Activated CD4-positive, alpha-beta T cell treated with anti-CD3 and anti-CD28 coated beads for 36 hours (primary cell): ENCODE measurements at regions of chr19 and their contacts with region 1.

Region 1: GRCh38 chr19:55624109-55625003 is at the start of gene ZNF784:
- DNase-seq: peak; percentile 97
- ATAC-seq: peak; percentile 70
- H3K4me3 Mint-ChIP-seq: peak within 1 kb of the TSS; percentile 79
- H3K27ac Mint-ChIP-seq: peak within 1 kb of the TSS; percentile 85
- H3K4me1 Mint-ChIP-seq: peaks cover 53% of the 10 kb centered on the region
- H3K27me3 Mint-ChIP-seq: no peaks in the 10 kb centered on the region
- total RNA-seq, gene ZNF784: 3.2 to 4.3 TPM

Region 2: GRCh38 chr19:55279770-55280643 is 344.3 kb before region 1 on chr19 and contains the start of gene HSPBP1:
- CTCF ChIA-PET with region 1: no interaction called
- POLR2A ChIA-PET with region 1: no interaction called
- intact Hi-C with region 1: loop called in 1 of 2 experiments (anchors 1 kb)
- DNase-seq: peak; percentile 98
- ATAC-seq: peak; percentile 92
- H3K4me3 Mint-ChIP-seq: peak within 1 kb of the TSS; percentile 100
- H3K27ac Mint-ChIP-seq: peak within 1 kb of the TSS; percentile 98
- H3K4me1 Mint-ChIP-seq: peaks cover 24% of the 10 kb centered on the region
- H3K27me3 Mint-ChIP-seq: no peaks in the 10 kb centered on the region
- total RNA-seq, gene HSPBP1: 41.1 to 45.2 TPM

Region 3: DNA sequence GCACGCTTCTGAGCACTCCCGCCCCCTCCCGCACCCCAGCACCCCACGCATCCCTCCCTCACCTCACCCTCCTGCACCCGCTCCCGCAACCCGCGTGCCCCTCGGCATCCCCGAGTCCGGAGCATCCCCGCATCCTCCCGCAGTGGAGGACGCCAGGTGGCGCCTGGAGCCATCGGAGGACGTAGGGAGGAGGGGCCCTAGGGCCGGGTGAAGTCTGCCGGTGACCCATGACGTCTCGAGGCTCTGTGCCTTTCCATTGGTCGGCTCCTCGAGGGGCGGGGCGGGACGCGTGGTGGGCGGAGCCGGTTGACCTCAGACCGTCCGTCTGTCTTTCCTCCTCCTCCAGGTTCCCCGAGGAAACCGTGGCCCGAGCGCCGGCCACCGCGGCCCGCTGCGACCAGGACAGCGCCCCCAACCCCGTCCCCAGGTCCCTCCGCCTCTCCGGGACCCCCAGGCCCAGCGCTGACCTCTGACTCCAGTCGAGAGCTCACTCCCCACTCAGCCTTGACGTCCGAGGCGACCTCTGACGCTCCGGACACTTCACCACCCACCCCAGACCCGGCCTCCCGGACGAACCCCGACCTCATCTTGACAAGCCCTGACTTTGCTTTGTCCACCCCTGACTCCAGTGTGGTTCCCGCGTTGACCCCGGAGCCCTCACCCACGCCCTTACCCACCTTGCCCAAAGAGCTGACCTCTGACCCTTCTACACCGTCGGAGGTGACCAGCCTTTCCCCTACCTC is 107.3 kb before region 1 on chr19:
- CTCF ChIA-PET with region 1: interaction called, 5 read pairs
- POLR2A ChIA-PET with region 1: no interaction called
- intact Hi-C with region 1: loop called (anchors 1 kb)
- DNase-seq: peak; percentile 96
- ATAC-seq: peak; percentile 100
- H3K4me3 Mint-ChIP-seq: peak overlapping the region; percentile 54
- H3K27ac Mint-ChIP-seq: peak overlapping the region; percentile 9
- H3K4me1 Mint-ChIP-seq: peaks cover 3% of the 10 kb centered on the region
- H3K27me3 Mint-ChIP-seq: no peaks in the 10 kb centered on the region

Region 4: DNA sequence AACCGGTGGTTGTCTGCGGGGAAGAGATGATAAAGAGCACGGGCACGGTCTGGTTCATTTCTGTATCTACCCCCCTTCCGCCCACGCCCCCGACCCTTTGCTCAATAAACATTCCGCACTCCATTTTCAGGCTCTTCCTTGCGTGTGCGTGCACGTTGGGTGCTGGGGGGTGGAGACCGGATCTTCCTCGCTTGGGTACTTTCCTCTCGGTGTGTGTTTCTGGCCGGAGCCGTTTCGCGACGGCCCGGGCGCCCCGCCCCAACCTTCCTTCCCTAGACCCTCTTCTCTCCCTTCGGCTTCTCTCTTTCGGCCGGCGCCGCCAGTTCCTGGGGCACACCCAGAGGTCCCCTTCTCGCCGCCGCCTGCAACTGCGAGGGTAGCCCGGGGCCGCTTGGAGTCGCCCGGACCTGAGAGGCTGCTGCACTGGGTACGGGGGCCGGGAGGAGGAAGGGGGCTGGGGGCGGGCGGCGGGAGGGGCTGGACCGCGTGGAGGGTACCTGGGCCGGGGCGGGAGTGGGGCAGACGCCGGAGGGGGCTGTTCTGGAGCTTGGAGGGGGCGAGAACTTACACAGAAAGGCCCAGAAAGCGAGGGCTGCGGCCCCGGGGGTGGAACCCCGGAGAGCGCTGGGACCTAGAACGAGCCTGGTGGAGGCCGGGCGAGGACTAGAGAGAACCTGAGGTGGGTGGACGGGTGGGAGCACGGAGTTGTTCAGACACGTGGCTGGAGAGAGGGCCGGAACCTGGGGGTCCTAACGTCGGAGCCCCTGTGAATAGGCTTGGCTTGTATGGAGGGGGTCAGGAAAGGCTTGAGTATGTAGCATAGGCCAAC is 19.2 kb after region 1 on chr19 and contains the start of gene ZNF581:
- CTCF ChIA-PET with region 1: interaction called, 15 read pairs
- POLR2A ChIA-PET with region 1: interaction called, 4 read pairs
- intact Hi-C with region 1: no loop called
- DNase-seq: peak; percentile 91
- ATAC-seq: peak; percentile 55
- H3K4me3 Mint-ChIP-seq: peak within 1 kb of the TSS; percentile 93
- H3K27ac Mint-ChIP-seq: peak within 1 kb of the TSS; percentile 99
- H3K4me1 Mint-ChIP-seq: peaks cover 44% of the 10 kb centered on the region
- H3K27me3 Mint-ChIP-seq: no peaks in the 10 kb centered on the region
- total RNA-seq, gene ZNF581: 18.9 to 26.9 TPM

Region 5: GRCh38 chr19:55703790-55704215 is 79.4 kb after region 1 on chr19:
- CTCF ChIA-PET with region 1: no interaction called
- POLR2A ChIA-PET with region 1: no interaction called
- intact Hi-C with region 1: no loop called
- DNase-seq: peak; percentile 76
- ATAC-seq: peak; percentile 78
- H3K4me3 Mint-ChIP-seq: no peak overlapping the region
- H3K27ac Mint-ChIP-seq: no peak overlapping the region
- H3K4me1 Mint-ChIP-seq: no peaks in the 10 kb centered on the region
- H3K27me3 Mint-ChIP-seq: no peaks in the 10 kb centered on the region

Region 6: DNA sequence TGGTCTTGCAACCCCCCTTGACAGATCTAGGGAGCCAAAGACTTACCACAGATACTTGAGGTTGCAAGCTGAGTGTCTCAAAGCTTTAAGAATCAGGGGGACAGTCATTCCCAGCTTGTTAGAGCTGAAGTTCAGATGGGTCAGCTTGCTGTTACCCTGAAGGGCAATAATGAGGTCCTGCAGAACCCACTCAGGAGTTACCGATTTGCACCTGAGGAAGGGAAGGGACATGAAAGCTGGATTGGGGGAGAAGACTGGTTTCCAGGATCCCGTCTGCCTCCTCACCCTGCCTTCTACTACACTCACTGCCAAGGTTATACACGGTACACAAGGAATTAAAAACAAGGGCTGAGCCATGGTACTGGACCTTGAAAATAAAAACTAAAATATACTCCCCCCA is 283.4 kb after region 1 on chr19:
- CTCF ChIA-PET with region 1: no interaction called
- POLR2A ChIA-PET with region 1: no interaction called
- intact Hi-C with region 1: no loop called
- DNase-seq: no peak
- ATAC-seq: no peak
- H3K4me3 Mint-ChIP-seq: no peak overlapping the region
- H3K27ac Mint-ChIP-seq: no peak overlapping the region
- H3K4me1 Mint-ChIP-seq: no peaks in the 10 kb centered on the region
- H3K27me3 Mint-ChIP-seq: peaks cover 2% of the 10 kb centered on the region